ENCODE measurements at regions of chr2 and their contacts with region 1.

Region 1: GRCh38 chr2:189783927-189784867 is at the starts of genes ORMDL1 and PMS1:
- DNase-seq: peak; percentile 94
- H3K4me3 Mint-ChIP-seq: peak within 1 kb of the TSS; percentile 90
- H3K27ac Mint-ChIP-seq: peak within 1 kb of the TSS; percentile 90
- H3K4me1 Mint-ChIP-seq: peaks cover 45% of the 10 kb centered on the region
- H3K27me3 Mint-ChIP-seq: no peaks in the 10 kb centered on the region
- total RNA-seq, gene ORMDL1: 68.8 and 72.1 TPM in 2 replicates
- total RNA-seq, gene PMS1: 57.0 and 58.7 TPM in 2 replicates

Region 2: DNA sequence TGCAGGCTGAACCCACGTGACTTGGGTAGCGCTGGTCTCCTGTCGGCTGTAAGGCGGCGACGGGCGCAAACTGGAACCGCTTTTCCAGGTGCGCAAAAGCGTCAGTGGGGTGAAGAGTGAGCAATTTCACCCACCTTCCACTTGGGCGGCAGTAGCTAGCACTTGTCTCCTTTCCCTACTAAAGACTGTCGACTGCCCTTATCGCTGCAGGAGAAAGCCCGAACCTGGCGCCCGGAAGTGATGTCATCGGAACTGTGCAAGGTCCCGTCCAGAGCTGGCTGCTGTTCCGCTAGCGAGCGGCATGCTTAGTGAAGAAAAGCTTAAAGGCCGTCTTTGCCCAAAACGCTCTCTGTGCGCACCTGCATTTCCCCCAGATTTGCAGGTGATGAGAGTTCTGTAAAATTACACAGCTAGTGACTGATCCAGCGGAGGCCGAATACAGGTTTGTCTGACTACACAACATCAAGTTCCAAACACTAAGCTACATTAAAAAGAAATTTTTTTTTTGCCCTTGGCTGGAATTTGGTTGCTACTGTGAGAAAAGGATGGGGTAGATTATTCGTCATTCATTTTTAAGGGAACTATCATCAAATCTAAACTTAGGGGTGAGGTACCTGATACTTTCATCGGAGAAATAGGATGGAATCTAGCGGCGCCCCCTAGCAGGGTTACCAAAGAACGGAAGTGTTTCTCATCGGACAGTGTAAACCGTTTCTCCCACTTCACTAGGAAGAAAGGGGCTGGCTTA is 21.5 kb before region 1 on chr2 and contains the start of gene OSGEPL1:
- intact Hi-C with region 1: loop called (anchors 1 kb)
- DNase-seq: peak; percentile 90
- H3K4me3 Mint-ChIP-seq: peak within 1 kb of the TSS; percentile 92
- H3K27ac Mint-ChIP-seq: peak within 1 kb of the TSS; percentile 97
- H3K4me1 Mint-ChIP-seq: peaks cover 12% of the 10 kb centered on the region
- H3K27me3 Mint-ChIP-seq: no peaks in the 10 kb centered on the region
- total RNA-seq, gene OSGEPL1: 9.7 and 11.6 TPM in 2 replicates

Region 3: GRCh38 chr2:189819297-189819704 is 35.1 kb after region 1 on chr2:
- intact Hi-C with region 1: loop called (anchors 2 kb)
- DNase-seq: no peak
- H3K4me3 Mint-ChIP-seq: no peak overlapping the region
- H3K27ac Mint-ChIP-seq: peak overlapping the region; percentile 81
- H3K4me1 Mint-ChIP-seq: peaks cover 18% of the 10 kb centered on the region
- H3K27me3 Mint-ChIP-seq: no peaks in the 10 kb centered on the region

Region 4: DNA sequence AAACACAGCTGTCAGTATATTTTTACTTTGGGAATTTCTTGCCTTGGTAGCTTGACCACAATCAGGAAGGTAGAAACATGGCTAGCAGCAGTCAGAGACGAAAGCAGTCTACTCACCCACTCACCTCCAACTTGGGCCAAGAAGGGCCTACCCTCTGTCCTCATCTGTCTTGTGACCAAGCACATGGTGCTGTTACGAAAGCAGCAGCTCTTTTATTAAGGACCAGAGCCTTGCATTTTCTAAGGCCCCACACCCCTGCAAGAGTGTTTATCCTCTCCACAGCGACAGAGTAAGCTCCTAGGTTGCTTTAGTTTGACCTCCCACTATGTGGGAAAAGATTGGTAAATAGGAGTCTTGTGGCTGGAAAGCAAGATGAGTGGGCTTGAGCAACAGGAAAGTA is 309.6 kb after region 1 on chr2:
- intact Hi-C with region 1: no loop called
- DNase-seq: no peak
- H3K4me3 Mint-ChIP-seq: no peak overlapping the region
- H3K27ac Mint-ChIP-seq: no peak overlapping the region
- H3K4me1 Mint-ChIP-seq: no peaks in the 10 kb centered on the region
- H3K27me3 Mint-ChIP-seq: no peaks in the 10 kb centered on the region

Region 5: GRCh38 chr2:190583507-190584337 is 799.5 kb after region 1 on chr2:
- intact Hi-C with region 1: no loop called
- DNase-seq: no peak
- H3K4me3 Mint-ChIP-seq: no peak overlapping the region
- H3K27ac Mint-ChIP-seq: no peak overlapping the region
- H3K4me1 Mint-ChIP-seq: peaks cover 19% of the 10 kb centered on the region
- H3K27me3 Mint-ChIP-seq: no peaks in the 10 kb centered on the region

Region 6: DNA sequence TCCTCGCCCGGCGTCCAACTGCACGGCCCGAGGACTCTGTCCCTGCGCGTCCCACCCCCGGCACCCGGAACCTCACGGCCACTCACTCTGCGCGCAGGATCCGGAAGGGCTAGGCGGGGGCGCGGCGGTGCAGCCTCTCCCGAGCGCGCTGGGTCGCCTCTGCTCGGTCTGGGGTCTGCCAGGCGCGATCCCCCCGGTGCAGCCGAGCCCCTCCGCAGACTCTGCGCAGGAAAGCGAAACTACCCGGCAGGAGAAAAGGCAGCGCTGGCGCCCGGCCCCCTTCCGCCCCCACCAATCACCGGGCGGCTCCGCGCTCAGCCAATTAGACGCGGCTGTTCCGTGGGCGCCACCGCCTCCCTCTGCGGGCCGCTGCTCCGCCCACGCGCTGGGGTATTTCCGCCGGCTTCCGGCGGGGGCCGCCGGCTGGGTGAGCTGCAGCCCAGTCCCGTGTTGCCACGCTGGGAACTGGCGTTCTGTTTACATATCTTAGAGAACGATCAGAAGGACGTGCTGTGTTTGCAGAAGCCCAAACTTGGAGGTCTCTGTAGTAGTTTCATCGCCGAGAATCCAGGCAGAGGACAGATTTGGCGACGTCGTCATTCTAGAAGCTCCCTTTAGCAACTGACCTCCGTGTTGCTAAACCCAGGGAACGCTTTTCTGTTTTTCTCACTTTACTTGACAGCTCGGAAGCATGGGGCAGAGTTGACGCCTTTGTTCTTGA is 1229.9 kb after region 1 on chr2 and contains the start of gene STAT1:
- intact Hi-C with region 1: loop called (anchors 5 kb)
- DNase-seq: peak; percentile 96
- H3K4me3 Mint-ChIP-seq: no peak within 1 kb of the TSS
- H3K27ac Mint-ChIP-seq: no peak within 1 kb of the TSS
- H3K4me1 Mint-ChIP-seq: peaks cover 40% of the 10 kb centered on the region
- H3K27me3 Mint-ChIP-seq: no peaks in the 10 kb centered on the region
- total RNA-seq, gene STAT1: 135 and 139 TPM in 2 replicates

Measured in activated T-helper 2 cell treated with anti-CD3 and anti-CD28 coated beads, Interferon-gamma antibody, Interleukin-2, Interleukin-4, amounts not matched to agents 10 μg/mL and 5 μg/mL and 100 μg/mL, durations not matched to agents 14 hours and 24 hours and 36 hours (primary cell).